MCF 10A (cell line): ENCODE measurements at regions of chr5 and their contacts with region 1.

Region 1: DNA sequence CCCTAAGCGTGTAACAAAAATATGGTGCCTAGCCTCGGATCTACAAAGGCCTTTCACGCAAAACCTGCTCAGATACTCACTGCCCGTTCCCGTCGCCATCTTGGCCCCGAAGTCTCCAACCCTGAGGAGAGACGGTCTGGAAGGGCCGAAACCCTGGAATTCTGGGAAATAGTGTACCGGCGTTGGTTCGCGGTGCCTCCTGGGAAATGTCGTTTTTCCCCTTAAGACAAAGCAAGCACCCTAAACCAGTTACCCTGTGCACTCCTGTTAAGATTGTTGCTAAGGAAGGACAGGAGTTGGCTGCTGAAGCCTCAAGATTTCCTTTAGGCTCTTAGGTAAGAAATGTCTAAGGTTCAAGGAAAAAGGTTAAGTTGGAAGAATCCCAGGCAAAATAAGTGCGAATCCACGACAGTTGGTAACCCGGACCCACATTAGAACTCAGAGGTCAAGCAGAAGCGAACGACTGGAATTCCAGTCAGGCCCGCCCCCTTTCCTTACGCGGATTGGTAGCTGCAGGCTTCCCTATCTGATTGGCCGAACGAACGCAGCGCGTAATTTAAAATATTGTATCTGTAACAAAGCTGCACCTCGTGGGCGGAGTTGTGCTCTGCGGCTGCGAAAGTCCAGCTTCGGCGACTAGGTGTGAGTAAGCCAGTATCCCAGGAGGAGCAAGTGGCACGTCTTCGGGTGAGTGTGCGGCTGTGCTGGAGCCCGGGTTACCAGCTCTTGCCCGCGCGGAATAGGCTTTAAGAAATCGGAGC is at the starts of genes BRD8 and KIF20A:
- DNase-seq: peak; percentile 100
- H3K4me3 Mint-ChIP-seq: no peak within 1 kb of the TSS
- H3K27ac Mint-ChIP-seq: no peak within 1 kb of the TSS
- H3K4me1 Mint-ChIP-seq: peaks cover 17% of the 10 kb centered on the region
- H3K27me3 Mint-ChIP-seq: no peaks in the 10 kb centered on the region
- CTCF ChIP-seq: no peak
- total RNA-seq, gene BRD8: 93.4 and 108 TPM in 2 replicates
- total RNA-seq, gene KIF20A: 19.0 and 30.6 TPM in 2 replicates

Region 2: GRCh38 chr5:138148811-138149210 is 29.9 kb before region 1 on chr5:
- CTCF ChIA-PET with region 1: interaction called, 5 read pairs
- POLR2A ChIA-PET with region 1: interaction called, 30 read pairs
- intact Hi-C with region 1: no loop called
- DNase-seq: peak; percentile 94
- H3K4me3 Mint-ChIP-seq: no peak overlapping the region
- H3K27ac Mint-ChIP-seq: no peak overlapping the region
- H3K4me1 Mint-ChIP-seq: no peaks in the 10 kb centered on the region
- H3K27me3 Mint-ChIP-seq: no peaks in the 10 kb centered on the region
- CTCF ChIP-seq: no peak

Region 3: GRCh38 chr5:138213161-138214029 is 34.7 kb after region 1 on chr5 and contains the start of gene CDC23:
- CTCF ChIA-PET with region 1: interaction called, 4 read pairs
- POLR2A ChIA-PET with region 1: interaction called, 25 read pairs
- intact Hi-C with region 1: no loop called
- DNase-seq: peak; percentile 100
- H3K4me3 Mint-ChIP-seq: peak within 1 kb of the TSS; percentile 98
- H3K27ac Mint-ChIP-seq: peak within 1 kb of the TSS; percentile 99
- H3K4me1 Mint-ChIP-seq: peaks cover 18% of the 10 kb centered on the region
- H3K27me3 Mint-ChIP-seq: no peaks in the 10 kb centered on the region
- CTCF ChIP-seq: no peak
- total RNA-seq, gene CDC23: 49.7 and 67.1 TPM in 2 replicates

Region 4: GRCh38 chr5:138282920-138283742 is 104.4 kb after region 1 on chr5:
- CTCF ChIA-PET with region 1: interaction called, 3 read pairs
- POLR2A ChIA-PET with region 1: no interaction called
- intact Hi-C with region 1: loop called (anchors 1 kb)
- DNase-seq: peak; percentile 57
- H3K4me3 Mint-ChIP-seq: no peak overlapping the region
- H3K27ac Mint-ChIP-seq: no peak overlapping the region
- H3K4me1 Mint-ChIP-seq: no peaks in the 10 kb centered on the region
- H3K27me3 Mint-ChIP-seq: no peaks in the 10 kb centered on the region
- CTCF ChIP-seq: peak; percentile 56

Region 5: GRCh38 chr5:138408023-138408422 is 229.3 kb after region 1 on chr5:
- CTCF ChIA-PET with region 1: interaction called, 18 read pairs
- POLR2A ChIA-PET with region 1: interaction called, 4 read pairs
- intact Hi-C with region 1: loop called (anchors 1 kb)
- DNase-seq: no peak
- H3K4me3 Mint-ChIP-seq: no peak overlapping the region
- H3K27ac Mint-ChIP-seq: no peak overlapping the region
- H3K4me1 Mint-ChIP-seq: peaks cover 5% of the 10 kb centered on the region
- H3K27me3 Mint-ChIP-seq: no peaks in the 10 kb centered on the region
- CTCF ChIP-seq: no peak

Region 6: GRCh38 chr5:138503487-138504270 is 325.0 kb after region 1 on chr5:
- CTCF ChIA-PET with region 1: interaction called, 11 read pairs
- POLR2A ChIA-PET with region 1: interaction called, 9 read pairs
- intact Hi-C with region 1: loop called (anchors 1 kb)
- DNase-seq: peak; percentile 86
- H3K4me3 Mint-ChIP-seq: no peak overlapping the region
- H3K27ac Mint-ChIP-seq: no peak overlapping the region
- H3K4me1 Mint-ChIP-seq: peaks cover 58% of the 10 kb centered on the region
- H3K27me3 Mint-ChIP-seq: no peaks in the 10 kb centered on the region
- CTCF ChIP-seq: peak; percentile 79